Ascending aorta (tissue), 2 donors: ENCODE measurements at regions of chr11 and their contacts with region 1.

Region 1: GRCh38 chr11:100575870-100576705 is 111.0 kb upstream of the ARHGAP42 start:
- DNase-seq: no peak
- H3K4me3 ChIP-seq: no peak overlapping the region
- H3K27ac ChIP-seq: no peak overlapping the region
- H3K4me1 ChIP-seq: no peaks in the 10 kb centered on the region
- H3K27me3 ChIP-seq: no peaks in the 10 kb centered on the region
- CTCF ChIP-seq: peak in 2 of 3 experiments; percentile 47 to 55

Region 2: DNA sequence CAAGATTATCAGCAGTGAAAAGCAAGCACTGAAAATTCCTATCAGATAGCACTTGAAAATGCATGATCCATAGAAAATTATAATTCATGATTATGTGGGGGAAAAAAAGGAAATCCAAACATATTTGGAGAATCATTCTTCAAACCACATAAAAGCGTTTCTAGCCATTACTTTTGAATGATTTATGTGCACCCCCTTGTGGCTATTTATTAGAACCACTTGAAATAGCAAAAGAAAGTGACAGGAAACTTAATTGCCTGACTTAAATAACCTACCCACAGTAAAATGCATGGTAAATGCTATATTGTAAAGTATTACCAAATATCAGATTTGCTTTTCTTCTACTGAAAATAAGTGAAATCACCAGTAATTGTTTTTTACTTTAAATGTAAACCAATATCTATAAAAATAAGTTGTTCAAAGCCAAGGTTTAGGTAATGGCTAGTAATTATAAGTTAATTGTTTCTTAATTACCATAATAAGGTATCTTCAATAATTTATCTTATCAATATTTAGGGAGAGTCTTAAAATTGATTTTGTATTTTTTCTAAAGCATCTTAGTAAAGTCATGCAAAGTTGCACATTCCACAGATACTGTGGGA is 279.5 kb after region 1 on chr11:
- intact Hi-C with region 1: loop called (anchors 2 kb)
- DNase-seq: no peak
- H3K4me3 ChIP-seq: no peak overlapping the region
- H3K27ac ChIP-seq: no peak overlapping the region
- H3K4me1 ChIP-seq: no peaks in the 10 kb centered on the region
- H3K27me3 ChIP-seq: no peaks in the 10 kb centered on the region
- CTCF ChIP-seq: peak in 2 of 3 experiments; percentile 47 to 56

Region 3: GRCh38 chr11:100930185-100930778 is 354.2 kb after region 1 on chr11:
- intact Hi-C with region 1: loop called (anchors 5 kb)
- DNase-seq: no peak
- H3K4me3 ChIP-seq: no peak overlapping the region
- H3K27ac ChIP-seq: no peak overlapping the region
- H3K4me1 ChIP-seq: no peaks in the 10 kb centered on the region
- H3K27me3 ChIP-seq: no peaks in the 10 kb centered on the region
- CTCF ChIP-seq: peak; percentile 39 to 66 (median 60)